ENCODE measurements at regions of chr11 and their contacts with region 1.

Region 1: DNA sequence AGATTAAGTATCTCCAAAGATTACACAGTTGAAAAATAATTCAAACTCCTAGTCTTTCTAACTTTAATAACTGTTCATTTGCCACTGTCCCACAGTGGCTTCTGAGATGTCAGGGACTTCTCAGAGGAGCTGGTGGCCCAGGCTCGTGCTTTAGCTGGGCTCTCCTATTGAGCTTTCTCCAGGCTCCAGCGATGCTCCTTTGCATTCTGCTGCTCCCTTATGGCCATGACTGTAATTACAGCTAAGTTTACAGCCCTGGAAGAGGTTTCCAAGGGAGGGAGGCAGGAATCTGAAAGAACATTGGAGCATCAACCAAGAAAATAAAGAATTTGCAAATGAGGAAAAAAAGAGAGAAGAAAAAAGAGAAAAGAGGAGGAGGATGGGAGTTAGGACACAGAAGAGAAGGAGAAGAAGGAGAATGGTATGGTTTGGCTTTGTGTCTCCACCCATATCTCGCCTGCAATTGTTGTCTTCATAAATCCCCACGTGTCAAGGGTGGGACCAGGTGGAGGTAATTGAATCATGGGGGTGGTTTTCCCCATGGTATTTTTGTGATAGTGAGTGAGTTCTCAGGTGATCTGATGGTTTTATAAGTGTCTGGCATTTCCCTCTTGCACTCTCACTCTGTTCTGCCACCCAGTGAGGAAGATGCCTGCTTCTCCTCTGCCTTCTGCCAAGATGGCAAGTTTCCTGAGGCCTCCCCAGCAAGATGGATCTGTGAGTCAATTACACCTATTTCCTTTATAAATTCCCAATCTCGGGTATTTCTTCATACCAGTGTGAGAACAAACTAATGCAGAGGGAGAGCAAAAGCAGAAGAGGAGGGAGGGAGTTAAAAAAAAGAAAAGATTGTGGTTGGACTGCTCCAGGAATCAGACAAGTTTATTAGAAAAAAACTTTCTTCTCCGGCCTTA is 857.0 kb downstream of the KCNA4 start:
- DNase-seq: peak; percentile 31
- ATAC-seq: peak; percentile 99
- H3K4me3 ChIP-seq: no peak overlapping the region
- H3K27ac ChIP-seq: no peak overlapping the region
- H3K4me1 ChIP-seq: no peaks in the 10 kb centered on the region
- H3K27me3 ChIP-seq: no peaks in the 10 kb centered on the region
- CTCF ChIP-seq: peak; percentile 53 to 78 (median 65); a peak in 5 of 6 replicates
- POLR2A ChIP-seq: peak; percentile 36
- RAD21 ChIP-seq: peak; percentile 81

Region 2: GRCh38 chr11:28697920-28698827 is 461.6 kb before region 1 on chr11:
- CTCF ChIA-PET with region 1: no interaction called
- POLR2A ChIA-PET with region 1: no interaction called
- RAD21 ChIA-PET with region 1: no interaction called
- intact Hi-C with region 1: loop called (anchors 10 kb)
- DNase-seq: peak; percentile 46
- ATAC-seq: peak; percentile 67
- H3K4me3 ChIP-seq: no peak overlapping the region
- H3K27ac ChIP-seq: no peak overlapping the region
- H3K4me1 ChIP-seq: peaks cover 17 to 21% of the 10 kb centered on the region in 2 experiments
- H3K27me3 ChIP-seq: no peaks in the 10 kb centered on the region
- CTCF ChIP-seq: peak; percentile 71 to 92 (median 85); a peak in 5 of 6 replicates
- POLR2A ChIP-seq: no peak
- RAD21 ChIP-seq: peak; percentile 85

Region 3: GRCh38 chr11:29129850-29130249 is 30.0 kb before region 1 on chr11:
- CTCF ChIA-PET with region 1: no interaction called
- POLR2A ChIA-PET with region 1: no interaction called
- RAD21 ChIA-PET with region 1: no interaction called
- intact Hi-C with region 1: no loop called
- DNase-seq: no peak
- ATAC-seq: no peak
- H3K4me3 ChIP-seq: no peak overlapping the region
- H3K27ac ChIP-seq: no peak overlapping the region
- H3K4me1 ChIP-seq: no peaks in the 10 kb centered on the region
- H3K27me3 ChIP-seq: no peaks in the 10 kb centered on the region
- CTCF ChIP-seq: no peak
- POLR2A ChIP-seq: no peak
- RAD21 ChIP-seq: no peak

Region 4: GRCh38 chr11:29395555-29396072 is 235.8 kb after region 1 on chr11:
- CTCF ChIA-PET with region 1: no interaction called
- POLR2A ChIA-PET with region 1: no interaction called
- RAD21 ChIA-PET with region 1: no interaction called
- intact Hi-C with region 1: no loop called
- DNase-seq: no peak
- ATAC-seq: no peak
- H3K4me3 ChIP-seq: no peak overlapping the region
- H3K27ac ChIP-seq: no peak overlapping the region
- H3K4me1 ChIP-seq: no peaks in the 10 kb centered on the region
- H3K27me3 ChIP-seq: 0 out of 2 replicates have a peak, but pooled peaks cover 4% of the 10 kb centered on the region
- CTCF ChIP-seq: no peak
- POLR2A ChIP-seq: no peak
- RAD21 ChIP-seq: no peak